Activated CD4-positive, alpha-beta T cell treated with anti-CD3 and anti-CD28 coated beads for 36 hours (primary cell): ENCODE measurements at regions of chr14 and their contacts with region 1.

Region 1: DNA sequence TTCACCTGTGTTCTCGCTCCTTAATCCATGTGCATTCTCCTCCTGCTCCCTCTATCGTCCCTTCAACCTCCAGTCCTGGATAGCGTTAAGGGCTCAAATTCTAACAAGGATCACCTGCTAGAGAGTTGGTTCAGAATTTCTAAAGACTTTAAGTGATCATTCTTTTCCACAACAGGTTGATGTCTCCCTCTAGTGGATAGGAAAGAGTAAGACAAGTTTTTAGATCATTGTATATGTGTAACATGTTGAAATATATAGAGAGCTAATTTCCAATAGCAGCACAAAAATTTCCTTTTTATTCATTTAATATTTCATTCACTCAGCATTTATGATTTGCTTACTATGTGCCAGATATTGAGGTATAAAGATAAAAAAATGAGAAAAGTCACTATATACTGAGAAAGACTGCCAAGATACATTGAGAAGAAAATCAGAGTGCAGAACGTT is 9.3 kb upstream of the ESR2 start:
- DNase-seq: no peak
- ATAC-seq: peak; percentile 68
- H3K4me3 Mint-ChIP-seq: no peak overlapping the region
- H3K27ac Mint-ChIP-seq: no peak overlapping the region
- H3K4me1 Mint-ChIP-seq: no peaks in the 10 kb centered on the region
- H3K27me3 Mint-ChIP-seq: peaks cover 2% of the 10 kb centered on the region

Region 2: DNA sequence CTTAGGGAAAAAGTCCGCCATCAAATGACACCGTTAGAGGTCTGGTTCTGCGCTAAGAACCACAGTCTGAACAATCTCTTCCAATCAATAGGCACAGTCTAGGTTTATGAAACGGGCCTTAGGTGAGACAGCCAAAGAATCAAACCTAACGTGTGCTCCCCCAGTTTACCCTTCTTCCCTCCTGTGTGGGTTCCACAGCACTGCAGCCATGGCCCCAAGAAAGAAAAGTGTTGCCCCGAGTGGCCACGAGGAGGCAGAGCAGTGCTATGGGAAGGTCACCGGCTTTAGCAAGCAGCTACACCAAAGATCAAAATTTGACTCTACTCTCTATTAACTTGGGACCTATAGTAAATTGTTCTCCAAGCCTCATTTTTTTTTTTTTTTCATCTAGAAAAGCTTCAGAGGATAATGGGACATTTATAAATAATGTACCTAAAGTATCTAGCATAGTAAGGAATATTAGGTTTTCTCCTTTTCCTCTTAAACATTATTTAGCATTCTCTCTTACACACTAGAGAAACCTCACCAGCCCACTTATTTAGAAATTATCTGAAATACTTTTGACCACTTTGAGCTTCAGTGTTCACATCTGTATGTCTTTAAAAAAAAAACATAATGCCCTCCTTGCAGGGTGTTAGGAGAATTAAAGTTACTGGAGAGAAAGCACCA is 914.6 kb before region 1 on chr14:
- CTCF ChIA-PET with region 1: no interaction called
- POLR2A ChIA-PET with region 1: no interaction called
- intact Hi-C with region 1: loop called in 1 of 2 experiments (anchors 5 kb)
- DNase-seq: peak; percentile 79
- ATAC-seq: peak; percentile 91
- H3K4me3 Mint-ChIP-seq: no peak overlapping the region
- H3K27ac Mint-ChIP-seq: no peak overlapping the region
- H3K4me1 Mint-ChIP-seq: peaks cover under 1% of the 10 kb centered on the region
- H3K27me3 Mint-ChIP-seq: no peaks in the 10 kb centered on the region

Region 3: DNA sequence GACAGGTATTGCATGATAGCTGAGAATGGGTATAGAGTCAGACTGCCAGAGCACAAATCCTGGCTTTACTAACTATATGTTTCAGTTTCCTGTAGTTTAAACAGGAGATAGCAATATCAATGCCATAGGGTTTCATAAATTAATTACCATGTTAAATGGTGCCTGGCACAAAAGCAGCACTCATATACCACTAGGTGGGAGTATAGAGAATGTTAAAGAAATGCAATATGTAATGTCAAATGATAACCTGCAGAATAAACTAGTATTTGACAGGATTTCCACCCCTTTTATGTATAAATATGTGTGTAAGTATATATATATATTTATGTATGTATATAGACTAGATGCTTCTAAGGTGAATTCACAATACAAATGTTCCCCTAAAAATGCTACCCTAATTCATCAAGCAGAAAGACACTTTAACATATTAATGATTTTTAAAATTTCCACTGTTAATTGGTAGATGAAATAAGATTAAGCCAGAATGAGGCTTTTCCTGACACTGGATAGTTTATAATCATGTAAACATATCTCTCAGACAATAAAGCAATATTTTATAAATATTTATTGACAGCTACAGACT is 670.5 kb before region 1 on chr14:
- CTCF ChIA-PET with region 1: no interaction called
- POLR2A ChIA-PET with region 1: no interaction called
- intact Hi-C with region 1: loop called in 1 of 2 experiments (anchors 5 kb)
- DNase-seq: no peak
- ATAC-seq: peak; percentile 69
- H3K4me3 Mint-ChIP-seq: no peak overlapping the region
- H3K27ac Mint-ChIP-seq: no peak overlapping the region
- H3K4me1 Mint-ChIP-seq: peaks cover 37% of the 10 kb centered on the region
- H3K27me3 Mint-ChIP-seq: no peaks in the 10 kb centered on the region

Region 4: DNA sequence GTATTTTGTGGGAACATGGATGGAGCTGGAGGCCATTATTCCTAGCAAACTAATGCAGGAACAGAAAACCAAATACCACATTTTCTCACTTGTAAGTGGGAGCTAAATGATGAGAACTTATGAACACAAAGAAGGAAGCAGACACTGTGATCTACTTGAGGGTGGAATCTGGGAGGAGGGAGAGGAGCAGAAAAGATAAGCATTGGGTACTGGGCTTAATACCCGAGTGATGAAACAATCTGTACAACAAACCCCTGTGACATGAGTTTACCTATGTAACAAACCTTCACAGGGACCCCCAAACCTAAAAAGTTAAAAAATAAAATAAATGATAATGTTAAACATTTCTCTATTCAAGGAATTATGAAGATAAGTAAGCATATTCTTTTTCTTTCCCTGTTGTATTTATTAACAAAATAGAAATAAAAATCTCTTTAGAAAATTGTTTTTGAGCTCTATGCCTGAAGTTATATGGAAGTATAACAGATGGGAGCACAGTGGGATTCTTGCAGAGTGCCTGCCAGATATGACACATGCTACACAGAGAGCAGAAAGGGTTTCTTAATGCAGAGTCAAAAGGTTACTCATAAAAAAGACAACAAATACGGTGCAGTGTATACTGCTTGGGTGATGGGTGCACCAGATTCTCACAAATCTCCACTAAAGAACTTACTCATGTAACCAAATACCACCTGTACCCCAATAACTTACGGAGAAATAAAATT is 502.7 kb before region 1 on chr14:
- CTCF ChIA-PET with region 1: interaction called, 20 read pairs
- POLR2A ChIA-PET with region 1: no interaction called
- intact Hi-C with region 1: loop called (anchors 1 to 2 kb)
- DNase-seq: no peak
- ATAC-seq: no peak
- H3K4me3 Mint-ChIP-seq: no peak overlapping the region
- H3K27ac Mint-ChIP-seq: no peak overlapping the region
- H3K4me1 Mint-ChIP-seq: peaks cover 6% of the 10 kb centered on the region
- H3K27me3 Mint-ChIP-seq: peaks cover 2% of the 10 kb centered on the region

Region 5: DNA sequence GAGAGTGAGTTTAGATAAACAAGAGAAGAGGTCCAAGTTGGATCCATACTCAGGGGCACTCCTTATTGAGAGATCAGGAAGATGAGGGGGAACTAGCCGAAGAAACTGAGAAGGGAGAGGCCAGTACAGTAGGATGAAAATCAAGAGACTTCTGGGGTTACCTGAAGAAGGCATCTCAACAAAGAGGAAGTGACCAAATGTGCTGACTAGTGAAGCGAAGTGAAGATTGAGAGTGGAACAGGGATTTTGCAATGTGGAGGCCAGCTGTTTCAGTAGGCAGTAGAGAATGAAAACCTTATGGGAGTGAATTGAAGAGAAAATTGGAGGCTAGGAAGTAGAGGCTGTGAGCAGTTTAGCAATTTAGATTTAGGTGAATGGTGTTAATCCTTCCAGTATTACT is 297.7 kb before region 1 on chr14:
- CTCF ChIA-PET with region 1: interaction called, 11 read pairs
- POLR2A ChIA-PET with region 1: no interaction called
- intact Hi-C with region 1: loop called (anchors 2 to 5 kb)
- DNase-seq: no peak
- ATAC-seq: no peak
- H3K4me3 Mint-ChIP-seq: no peak overlapping the region
- H3K27ac Mint-ChIP-seq: no peak overlapping the region
- H3K4me1 Mint-ChIP-seq: no peaks in the 10 kb centered on the region
- H3K27me3 Mint-ChIP-seq: no peaks in the 10 kb centered on the region

Region 6: DNA sequence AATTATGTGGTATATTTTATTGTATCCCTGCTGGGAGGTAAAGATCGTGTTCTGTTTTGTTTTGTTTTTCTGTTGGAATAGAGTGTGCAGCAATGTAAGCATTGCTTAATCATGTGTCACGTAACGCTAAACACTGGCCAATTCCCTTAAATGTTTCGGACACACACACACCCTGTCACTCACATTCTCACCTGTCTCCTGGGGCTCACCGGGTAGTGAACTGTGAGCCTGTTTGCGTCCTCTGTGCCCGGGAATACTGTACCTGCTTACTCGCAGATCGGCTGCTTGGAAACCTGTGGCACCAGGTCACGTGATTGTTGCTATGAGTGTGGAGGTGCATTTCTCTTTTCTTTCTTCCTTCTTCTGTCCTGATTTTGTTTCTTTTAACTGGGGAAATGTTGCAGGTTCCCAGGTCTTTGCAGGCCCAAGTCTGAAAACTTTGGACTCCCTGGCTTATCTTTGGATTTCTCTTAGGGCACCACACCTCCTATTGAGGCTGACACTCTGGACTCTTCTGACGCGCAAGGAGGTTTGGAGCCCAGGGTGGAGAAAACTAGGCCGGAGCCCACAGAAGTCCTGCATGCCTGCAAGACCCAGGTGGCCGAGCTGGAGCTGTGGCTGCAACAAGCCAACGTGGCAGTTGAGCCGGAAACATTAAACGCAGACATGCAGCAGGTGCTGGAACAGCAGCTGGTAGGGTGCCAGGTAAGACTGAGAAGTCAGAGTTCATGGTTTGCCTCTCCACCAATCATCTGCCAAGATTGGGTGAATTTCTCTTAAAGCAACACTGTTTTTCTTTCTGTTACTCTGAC is 190.4 kb before region 1 on chr14:
- CTCF ChIA-PET with region 1: no interaction called
- POLR2A ChIA-PET with region 1: no interaction called
- intact Hi-C with region 1: no loop called
- DNase-seq: no peak
- ATAC-seq: no peak
- H3K4me3 Mint-ChIP-seq: no peak overlapping the region
- H3K27ac Mint-ChIP-seq: no peak overlapping the region
- H3K4me1 Mint-ChIP-seq: no peaks in the 10 kb centered on the region
- H3K27me3 Mint-ChIP-seq: no peaks in the 10 kb centered on the region

Region 7: GRCh38 chr14:64174922-64175782 is 128.3 kb before region 1 on chr14:
- CTCF ChIA-PET with region 1: interaction called, 11 read pairs
- POLR2A ChIA-PET with region 1: no interaction called
- intact Hi-C with region 1: no loop called
- DNase-seq: peak; percentile 41
- ATAC-seq: peak; percentile 76
- H3K4me3 Mint-ChIP-seq: no peak overlapping the region
- H3K27ac Mint-ChIP-seq: peak overlapping the region; percentile 33
- H3K4me1 Mint-ChIP-seq: peaks cover 26% of the 10 kb centered on the region
- H3K27me3 Mint-ChIP-seq: no peaks in the 10 kb centered on the region

Region 8: DNA sequence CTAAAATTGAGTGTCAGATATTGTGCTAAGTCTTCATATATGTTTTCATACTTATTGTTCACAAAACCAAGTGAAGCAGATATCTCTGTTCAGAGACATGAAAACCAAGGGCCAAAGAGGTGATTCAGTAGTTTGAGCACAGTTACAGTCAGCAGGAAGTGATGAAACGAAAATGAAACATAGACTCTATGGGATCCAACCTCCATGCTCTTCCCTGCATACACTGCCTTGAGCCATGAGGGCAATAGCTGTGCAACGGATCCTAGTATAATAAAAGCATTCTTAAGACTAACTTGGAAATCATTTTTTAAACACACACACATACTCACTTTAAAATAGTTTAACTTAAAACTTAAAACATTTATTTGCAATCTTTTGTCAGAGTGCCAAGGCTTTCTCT is 37.3 kb before region 1 on chr14:
- CTCF ChIA-PET with region 1: interaction called, 15 read pairs
- POLR2A ChIA-PET with region 1: no interaction called
- intact Hi-C with region 1: no loop called
- DNase-seq: no peak
- ATAC-seq: peak; percentile 92
- H3K4me3 Mint-ChIP-seq: no peak overlapping the region
- H3K27ac Mint-ChIP-seq: peak overlapping the region; percentile 21
- H3K4me1 Mint-ChIP-seq: peaks cover 16% of the 10 kb centered on the region
- H3K27me3 Mint-ChIP-seq: no peaks in the 10 kb centered on the region